Right cardiac atrium (tissue), 5 donors: ENCODE measurements at regions of chr12 and their contacts with region 1.

Region 1: DNA sequence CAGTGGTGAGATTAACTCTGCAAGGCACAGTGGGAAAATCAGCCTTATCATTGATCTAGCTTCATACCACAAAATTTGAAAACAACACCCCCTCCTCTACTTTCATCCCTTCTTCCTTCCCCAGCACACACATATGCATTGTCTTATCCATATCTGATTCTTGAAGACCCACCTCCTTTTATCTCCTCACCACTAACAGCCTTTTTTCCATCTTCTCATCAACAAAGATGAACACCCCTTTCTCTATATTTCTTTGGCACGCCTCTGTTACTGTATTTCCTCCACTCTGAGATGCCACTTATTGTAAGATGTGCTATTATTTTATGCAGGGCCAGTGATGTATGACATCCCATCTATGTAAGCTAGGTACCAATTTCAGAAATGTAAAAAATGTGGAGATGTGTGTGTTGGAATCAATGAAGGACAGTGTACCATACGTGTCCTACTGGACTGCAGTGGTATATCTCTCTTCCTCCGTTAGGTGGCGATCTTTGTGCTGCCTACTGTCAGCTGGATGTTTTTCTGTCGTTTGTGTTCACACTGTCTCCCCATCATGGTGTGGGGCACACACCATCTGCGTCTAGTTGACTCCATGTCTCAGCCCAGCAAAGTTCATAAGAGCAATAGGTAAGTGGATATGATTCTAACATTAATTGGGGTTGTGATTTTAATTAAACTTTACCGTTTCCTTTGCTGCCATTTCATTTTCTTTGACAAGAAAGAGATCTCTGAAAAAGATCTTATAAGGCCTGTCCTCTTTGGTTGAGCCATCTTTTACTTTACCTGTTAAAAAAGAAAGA is 24.0 kb downstream of the CCDC38 start:
- DNase-seq: peak in 1 of 3 donors; percentile 51
- ATAC-seq: peak; percentile 78 to 80
- H3K4me3 ChIP-seq: no peak overlapping the region
- H3K27ac ChIP-seq: no peak overlapping the region
- H3K4me1 ChIP-seq: no peaks in the 10 kb centered on the region
- H3K27me3 ChIP-seq: no peaks in the 10 kb centered on the region

Region 2: GRCh38 chr12:95998611-95999286 is 80.4 kb after region 1 on chr12:
- intact Hi-C with region 1: loop called (anchors 5 kb)
- DNase-seq: no peak
- ATAC-seq: peak; percentile 80 to 83
- H3K4me3 ChIP-seq: no peak overlapping the region
- H3K27ac ChIP-seq: no peak overlapping the region
- H3K4me1 ChIP-seq: peaks cover 2% of the 10 kb centered on the region
- H3K27me3 ChIP-seq: no peaks in the 10 kb centered on the region